ENCODE measurements at regions of chr2 and their contacts with region 1.

Region 1: DNA sequence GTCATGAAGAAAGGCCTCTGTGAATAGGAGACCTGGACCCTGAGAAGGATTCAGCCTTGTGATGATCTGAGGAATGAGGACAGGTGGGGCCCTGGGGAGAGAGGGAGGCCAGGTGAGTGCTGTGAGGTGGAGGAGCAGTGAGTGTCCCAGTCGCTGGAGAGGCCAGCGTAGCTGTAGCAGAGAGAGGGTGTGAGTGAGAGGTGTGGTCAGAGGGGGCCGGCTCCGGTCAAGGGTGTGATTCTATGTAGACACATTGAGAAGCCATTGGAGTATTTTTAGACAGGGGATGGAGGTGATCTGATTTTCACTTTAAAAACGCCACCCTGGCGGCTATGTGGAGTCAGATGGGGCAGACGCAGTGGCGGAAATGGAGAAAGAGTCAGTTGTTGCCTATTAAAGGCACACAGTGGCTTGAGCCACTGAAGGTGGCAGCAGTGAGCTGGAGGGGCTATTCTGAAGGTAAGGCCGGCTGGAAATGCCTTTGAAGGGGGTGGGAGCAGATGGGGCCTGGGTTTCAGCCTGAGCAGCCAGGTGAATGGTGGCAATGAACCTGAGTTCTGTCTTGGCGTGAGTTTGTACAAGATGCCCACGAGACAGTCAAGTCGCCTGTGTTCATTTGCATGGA is 55.6 kb downstream of the GREB1 start:
- DNase-seq: no peak

Region 2: GRCh38 chr2:11398747-11399437 is 190.5 kb before region 1 on chr2:
- intact Hi-C with region 1: no loop called
- DNase-seq: no peak

Region 3: GRCh38 chr2:11417946-11418585 is 171.4 kb before region 1 on chr2:
- intact Hi-C with region 1: loop called (anchors 5 kb)
- DNase-seq: no peak

Region 4: GRCh38 chr2:11515490-11515981 is 73.9 kb before region 1 on chr2:
- intact Hi-C with region 1: no loop called
- DNase-seq: no peak

Region 5: DNA sequence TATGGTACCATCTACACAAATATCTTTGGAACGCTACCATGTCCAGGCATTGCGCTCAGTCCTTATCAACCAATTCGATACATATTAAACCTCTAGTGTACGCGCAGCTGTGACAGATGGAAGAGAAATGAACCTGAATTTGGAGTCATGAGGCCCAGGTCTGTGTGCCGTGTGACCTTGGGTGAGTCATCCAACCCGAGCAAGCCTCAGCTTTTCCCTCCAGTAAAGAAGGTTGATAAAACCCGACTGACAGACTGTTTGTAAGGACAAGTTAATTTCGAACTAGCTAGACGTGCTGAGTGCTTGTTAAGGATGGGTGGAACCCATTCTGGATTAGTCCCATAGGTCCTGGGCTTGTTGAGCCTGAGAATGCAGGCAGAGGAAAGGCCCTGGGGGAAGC is 27.4 kb before region 1 on chr2:
- intact Hi-C with region 1: no loop called
- DNase-seq: peak; percentile 53

Region 6: DNA sequence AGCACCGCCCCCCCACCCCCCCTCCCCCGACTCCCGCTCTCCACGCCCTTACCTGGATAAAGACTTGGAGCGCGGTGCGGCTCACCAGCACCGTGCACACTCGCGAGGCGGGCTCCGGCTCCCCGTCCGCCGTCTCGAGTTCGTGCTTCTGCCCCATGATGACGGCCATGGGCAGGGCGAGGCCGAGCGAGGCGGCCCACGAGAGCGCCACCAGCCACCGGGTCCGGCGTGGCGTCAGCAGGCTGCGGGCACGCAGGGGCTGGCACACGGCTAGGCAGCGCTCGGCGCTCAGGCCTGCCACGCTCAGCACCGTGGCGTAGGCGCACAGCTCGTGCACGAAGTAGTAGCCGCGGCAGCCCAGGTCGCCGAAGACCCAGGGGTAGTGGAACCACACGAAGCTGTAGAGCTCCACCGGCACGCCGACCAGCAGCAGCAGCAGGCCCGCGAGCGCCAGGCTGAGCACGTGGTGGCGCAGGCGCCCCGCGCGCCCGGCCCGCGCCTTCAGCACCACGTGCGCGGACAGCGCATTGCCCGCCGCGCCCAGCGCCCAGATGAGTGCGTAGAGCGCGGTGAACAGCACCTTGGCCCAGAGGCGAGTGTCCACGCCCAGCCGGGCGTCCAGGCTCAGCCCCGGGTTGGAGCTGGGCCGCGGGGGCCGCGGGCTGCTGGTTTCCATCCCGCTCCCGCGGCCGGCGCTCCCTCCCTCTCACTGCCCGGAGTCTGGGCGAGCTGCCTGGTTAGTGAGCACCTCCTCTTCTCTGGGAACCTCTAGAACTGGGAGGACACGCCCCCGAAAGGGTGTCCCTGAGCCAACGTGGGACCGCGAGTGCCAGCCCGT is 80.2 kb after region 1 on chr2 and contains the start of gene NTSR2:
- intact Hi-C with region 1: no loop called
- DNase-seq: no peak
- total RNA-seq, gene NTSR2: not detected

Measured in cardiac septum (tissue), 1 donor.